ENCODE measurements at regions of chr7 and their contacts with region 1.

Region 1: DNA sequence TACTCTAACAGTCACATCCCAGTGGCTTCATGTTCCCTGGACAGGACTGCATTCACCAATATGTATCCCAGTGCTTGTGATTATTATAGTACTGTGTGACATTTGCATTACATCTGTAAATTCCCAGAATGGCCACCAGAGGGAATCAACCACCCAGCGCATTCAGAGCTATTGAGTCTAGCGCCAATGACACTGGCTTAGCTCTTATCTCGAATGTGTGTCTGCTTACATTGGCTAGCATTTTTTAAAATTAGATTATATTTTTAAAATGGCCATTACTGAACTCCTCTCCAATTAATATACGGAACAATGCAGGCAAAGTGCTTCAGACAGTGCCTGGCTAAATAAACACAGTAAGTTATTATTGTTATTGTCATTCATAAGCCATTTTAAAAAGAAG is 36.3 kb downstream of the TRIL start:
- DNase-seq: peak; percentile 22 to 48
- H3K4me3 ChIP-seq: no peak overlapping the region
- H3K27ac ChIP-seq: no peak overlapping the region
- H3K4me1 ChIP-seq: peaks cover 0 to 10% of the 10 kb centered on the region in 2 donors
- H3K27me3 ChIP-seq: no peaks in the 10 kb centered on the region
- CTCF ChIP-seq: peak; percentile 78 to 85 (median 84)
- POLR2A ChIP-seq: no peak

Region 2: DNA sequence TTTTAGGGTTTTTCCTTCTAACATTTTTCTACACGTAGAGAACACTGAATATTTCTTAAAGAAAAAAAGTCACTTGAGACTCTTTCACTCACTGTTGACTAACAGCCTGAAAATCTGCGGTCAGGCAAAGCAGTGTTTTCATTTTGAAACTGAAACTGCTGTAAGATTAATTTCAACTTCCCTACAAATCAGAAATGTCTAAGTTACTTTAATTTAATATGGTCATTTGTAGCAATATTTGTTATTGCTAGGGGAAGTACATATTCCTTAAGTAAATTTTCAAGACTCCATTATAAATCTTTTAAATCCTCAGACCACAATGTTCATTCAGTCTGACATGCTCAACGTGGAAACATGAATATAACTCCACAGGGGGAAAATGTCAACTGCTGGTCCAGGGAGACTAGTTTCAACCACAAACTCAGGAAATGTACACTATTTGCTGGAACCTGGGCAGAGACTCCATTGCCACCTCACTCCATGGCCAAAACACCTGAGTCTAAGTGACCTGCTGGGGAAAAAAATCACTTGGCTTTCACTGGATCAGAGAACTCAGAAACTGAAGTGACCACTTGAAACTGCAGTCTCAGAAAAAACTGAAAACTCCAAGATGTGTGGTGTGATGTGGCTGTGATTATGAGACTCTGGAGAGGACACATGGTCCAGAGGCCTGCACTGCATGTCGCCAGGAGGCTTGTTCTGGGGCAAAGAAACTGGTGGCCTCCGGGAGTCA is 1020.6 kb before region 1 on chr7:
- intact Hi-C with region 1: no loop called
- DNase-seq: no peak
- H3K4me3 ChIP-seq: no peak overlapping the region
- H3K27ac ChIP-seq: peak overlapping the region in 1 of 2 donors; percentile 18
- H3K4me1 ChIP-seq: no peaks in the 10 kb centered on the region
- H3K27me3 ChIP-seq: no peaks in the 10 kb centered on the region
- CTCF ChIP-seq: no peak
- POLR2A ChIP-seq: no peak

Region 3: GRCh38 chr7:28830846-28831245 is 91.0 kb before region 1 on chr7:
- intact Hi-C with region 1: no loop called
- DNase-seq: no peak
- H3K4me3 ChIP-seq: no peak overlapping the region
- H3K27ac ChIP-seq: no peak overlapping the region
- H3K4me1 ChIP-seq: no peaks in the 10 kb centered on the region
- H3K27me3 ChIP-seq: no peaks in the 10 kb centered on the region
- CTCF ChIP-seq: no peak
- POLR2A ChIP-seq: no peak

Region 4: GRCh38 chr7:29105752-29106668 is 184.2 kb after region 1 on chr7:
- intact Hi-C with region 1: loop called (anchors 2 kb)
- DNase-seq: peak; percentile 33 to 43
- H3K4me3 ChIP-seq: no peak overlapping the region
- H3K27ac ChIP-seq: no peak overlapping the region
- H3K4me1 ChIP-seq: peaks cover 0 to 1% of the 10 kb centered on the region in 2 donors
- H3K27me3 ChIP-seq: no peaks in the 10 kb centered on the region
- CTCF ChIP-seq: peak; percentile 65 to 92 (median 79)
- POLR2A ChIP-seq: no peak